ENCODE measurements at regions of chr4 and their contacts with region 1.

Region 1: GRCh38 chr4:138522366-138522765 is 280.2 kb upstream of the SLC7A11 start:
- DNase-seq: peak; percentile 46
- H3K4me3 ChIP-seq: no peak overlapping the region
- H3K27ac ChIP-seq: no peak overlapping the region
- H3K4me1 ChIP-seq: peaks cover 5% of the 10 kb centered on the region
- H3K27me3 ChIP-seq: no peaks in the 10 kb centered on the region
- CTCF ChIP-seq: peak; percentile 52

Region 2: GRCh38 chr4:138494931-138495330 is 27.4 kb before region 1 on chr4:
- CTCF ChIA-PET with region 1: interaction called, 3 read pairs
- POLR2A ChIA-PET with region 1: no interaction called
- intact Hi-C with region 1: loop called (anchors 1 kb)
- DNase-seq: peak; percentile 86
- H3K4me3 ChIP-seq: no peak overlapping the region
- H3K27ac ChIP-seq: no peak overlapping the region
- H3K4me1 ChIP-seq: peaks cover 14% of the 10 kb centered on the region
- H3K27me3 ChIP-seq: no peaks in the 10 kb centered on the region
- CTCF ChIP-seq: peak; percentile 61

Region 3: DNA sequence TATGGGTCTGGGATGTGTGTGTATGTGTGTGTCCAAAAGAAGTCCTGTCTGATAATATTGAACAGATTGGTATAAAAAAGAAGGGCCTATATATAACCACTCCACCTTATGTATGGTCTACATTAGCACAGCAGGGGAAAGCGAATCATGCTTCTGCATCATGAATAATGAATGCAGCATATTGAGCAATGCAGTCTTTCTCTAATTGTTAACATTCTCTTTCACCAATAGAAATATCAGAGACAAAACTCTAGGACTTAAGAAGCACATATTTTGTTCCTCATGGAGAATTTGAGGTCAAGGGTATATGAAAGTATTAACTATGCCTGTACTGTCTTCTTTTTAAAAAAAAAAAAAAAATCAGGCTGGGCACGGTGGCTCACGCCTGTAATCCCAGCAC is 228.9 kb after region 1 on chr4:
- CTCF ChIA-PET with region 1: no interaction called
- POLR2A ChIA-PET with region 1: no interaction called
- intact Hi-C with region 1: no loop called
- DNase-seq: peak; percentile 47
- H3K4me3 ChIP-seq: no peak overlapping the region
- H3K27ac ChIP-seq: no peak overlapping the region
- H3K4me1 ChIP-seq: no peaks in the 10 kb centered on the region
- H3K27me3 ChIP-seq: no peaks in the 10 kb centered on the region
- CTCF ChIP-seq: no peak

Measured in A673 (cell line).